ENCODE measurements at regions of chr12 and their contacts with region 1.

Region 1: GRCh38 chr12:49043856-49044258 is 16.7 kb downstream of the KMT2D start:
- DNase-seq: peak; percentile 64 to 84 (median 79)
- H3K4me3 ChIP-seq: no peak overlapping the region
- H3K27ac ChIP-seq: no peak overlapping the region
- H3K4me1 ChIP-seq: no peaks in the 10 kb centered on the region
- H3K27me3 ChIP-seq: no peaks in the 10 kb centered on the region

Region 2: DNA sequence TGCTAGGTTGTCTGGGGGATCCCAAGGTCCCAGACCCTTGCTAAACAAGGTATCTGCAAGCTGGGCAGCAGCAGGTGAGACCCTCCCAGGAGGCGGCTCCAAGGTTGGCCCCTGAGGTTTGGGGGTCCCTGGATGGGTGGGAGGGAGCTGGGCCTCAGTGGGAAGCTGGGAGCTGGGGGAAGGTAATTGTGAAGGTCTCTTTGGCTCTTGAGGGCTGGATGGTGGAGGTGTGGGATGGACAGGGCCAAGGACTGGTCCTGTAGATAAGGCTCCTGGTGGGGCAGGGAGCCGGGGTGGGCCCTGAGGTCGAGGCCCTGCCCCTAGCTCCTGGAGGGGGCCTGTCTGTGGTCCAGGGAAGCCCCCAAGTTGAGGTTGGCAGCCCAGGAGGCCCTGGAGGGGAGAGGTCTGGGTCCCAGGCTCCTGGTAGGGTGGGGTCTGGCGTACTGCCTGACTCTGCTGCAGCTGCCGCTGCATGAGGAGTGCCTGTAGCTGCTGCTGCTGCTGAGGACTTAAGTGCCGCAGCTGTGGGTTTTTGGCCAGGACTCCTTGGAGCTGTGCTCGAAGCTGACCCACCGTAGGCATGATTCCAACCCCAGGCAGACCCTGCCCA is 12.2 kb before region 1 on chr12:
- CTCF ChIA-PET with region 1: interaction called, 121 read pairs
- POLR2A ChIA-PET with region 1: no interaction called
- DNase-seq: no peak
- H3K4me3 ChIP-seq: no peak overlapping the region
- H3K27ac ChIP-seq: no peak overlapping the region
- H3K4me1 ChIP-seq: no peaks in the 10 kb centered on the region
- H3K27me3 ChIP-seq: no peaks in the 10 kb centered on the region

Region 3: GRCh38 chr12:49060237-49061156 is 16.6 kb after region 1 on chr12 and contains the start of gene KMT2D:
- CTCF ChIA-PET with region 1: interaction called, 38 read pairs
- POLR2A ChIA-PET with region 1: no interaction called
- DNase-seq: peak; percentile 97 to 99 (median 98)
- H3K4me3 ChIP-seq: peak within 1 kb of the TSS; percentile 89 to 98 (median 95)
- H3K27ac ChIP-seq: peak within 1 kb of the TSS; percentile 95 to 99
- H3K4me1 ChIP-seq: peaks cover 29 to 54% (median 47%) of the 10 kb centered on the region in 4 experiments
- H3K27me3 ChIP-seq: no peaks in the 10 kb centered on the region

Measured in common myeloid progenitor, CD34-positive (primary cell).